Calu3 (cell line): ENCODE measurements at regions of chr7 and their contacts with region 1.

Region 1: DNA sequence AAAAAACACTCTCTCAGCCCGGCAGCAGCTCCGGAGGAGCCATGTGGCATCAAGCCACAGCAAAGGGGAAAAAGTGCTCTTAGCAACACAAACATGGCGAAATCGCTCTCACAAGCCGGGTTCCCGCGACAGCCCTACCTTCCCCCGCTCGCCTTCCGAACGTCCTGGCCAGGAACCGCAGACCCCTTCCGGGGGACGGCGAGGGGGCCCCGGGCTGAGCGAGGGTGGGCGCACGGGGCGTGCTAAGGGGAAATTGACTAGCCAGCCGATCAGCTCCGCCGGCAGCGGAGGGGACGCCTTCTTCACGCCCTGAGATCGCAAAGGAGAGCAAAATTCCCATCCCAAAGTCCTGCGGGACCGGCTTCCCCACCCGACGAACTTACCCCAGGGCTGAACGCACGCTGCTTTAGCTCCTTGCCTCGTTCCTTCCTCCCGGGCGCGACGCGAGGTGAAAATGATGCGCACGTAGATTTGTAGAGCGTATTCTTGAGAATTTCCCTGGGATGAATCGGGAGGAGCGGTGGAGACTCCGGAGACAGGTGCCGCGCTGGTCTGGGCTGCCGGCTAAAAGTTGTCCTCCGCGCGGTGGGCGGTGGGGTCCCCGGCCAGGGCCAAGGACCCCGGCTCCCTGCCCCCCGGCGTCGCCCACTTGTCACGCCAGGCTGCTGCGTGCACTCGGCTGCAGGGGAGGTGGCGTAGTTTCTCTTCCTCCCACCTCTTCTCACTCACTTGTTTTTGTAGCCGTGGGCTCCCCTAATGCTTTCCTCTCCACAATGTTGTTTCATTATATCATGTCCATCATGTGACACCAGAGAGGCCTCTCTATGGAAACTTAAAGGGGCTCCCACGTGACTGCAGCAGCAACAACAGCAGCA is 220.1 kb upstream of the MKLN1 start:
- DNase-seq: peak; percentile 52
- H3K4me3 Mint-ChIP-seq: peak overlapping the region; percentile 100
- H3K27ac Mint-ChIP-seq: peak overlapping the region; percentile 91
- H3K4me1 Mint-ChIP-seq: peaks cover 47% of the 10 kb centered on the region
- H3K27me3 Mint-ChIP-seq: no peaks in the 10 kb centered on the region
- CTCF ChIP-seq: no peak

Region 2: DNA sequence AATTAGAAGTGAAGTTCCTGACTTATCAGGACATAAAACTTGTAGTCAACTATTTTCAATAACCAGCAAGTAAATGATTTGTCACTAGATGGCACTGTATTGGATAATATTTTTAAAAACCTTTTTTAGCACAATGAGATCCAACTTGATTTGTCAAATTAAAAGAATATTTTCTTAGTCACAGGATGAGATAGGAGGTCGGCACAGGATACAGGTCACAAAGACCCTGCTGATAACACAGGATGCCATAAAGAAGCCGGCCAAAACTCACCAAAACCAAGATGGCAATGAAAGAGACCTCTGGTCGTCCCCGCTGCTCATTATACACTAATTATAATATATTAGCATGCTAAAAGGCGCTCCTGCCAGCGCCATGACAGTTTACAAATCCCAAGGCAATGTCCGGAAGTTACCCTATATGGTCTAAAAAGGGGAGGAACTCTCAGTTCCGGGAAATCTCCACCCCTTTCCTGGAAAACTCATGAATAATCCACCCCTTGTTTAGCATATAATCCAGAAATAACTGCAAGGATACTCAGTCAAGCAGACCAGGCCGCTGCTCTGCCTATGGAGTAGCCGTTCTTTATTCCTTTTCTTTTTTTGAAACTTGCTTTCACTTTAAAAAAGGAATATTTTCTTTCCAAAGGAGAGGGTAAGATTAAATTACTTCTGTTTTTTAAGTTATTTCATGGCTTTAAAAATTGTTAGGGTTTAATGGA is 35.6 kb before region 1 on chr7:
- CTCF ChIA-PET with region 1: interaction called, 4 read pairs
- intact Hi-C with region 1: loop called (anchors 5 kb)
- DNase-seq: peak; percentile 81
- H3K4me3 Mint-ChIP-seq: peak overlapping the region; percentile 50
- H3K27ac Mint-ChIP-seq: peak overlapping the region; percentile 58
- H3K4me1 Mint-ChIP-seq: peaks cover 26% of the 10 kb centered on the region
- H3K27me3 Mint-ChIP-seq: no peaks in the 10 kb centered on the region
- CTCF ChIP-seq: peak; percentile 67

Region 3: GRCh38 chr7:131231381-131232220 is 124.0 kb after region 1 on chr7:
- CTCF ChIA-PET with region 1: interaction called, 3 read pairs
- intact Hi-C with region 1: loop called (anchors 5 kb)
- DNase-seq: no peak
- H3K4me3 Mint-ChIP-seq: no peak overlapping the region
- H3K27ac Mint-ChIP-seq: peak overlapping the region; percentile 18
- H3K4me1 Mint-ChIP-seq: peaks cover 48% of the 10 kb centered on the region
- H3K27me3 Mint-ChIP-seq: no peaks in the 10 kb centered on the region
- CTCF ChIP-seq: no peak

Region 4: GRCh38 chr7:131459256-131459655 is 351.7 kb after region 1 on chr7:
- CTCF ChIA-PET with region 1: no interaction called
- intact Hi-C with region 1: no loop called
- DNase-seq: no peak
- H3K4me3 Mint-ChIP-seq: no peak overlapping the region
- H3K27ac Mint-ChIP-seq: peak overlapping the region; percentile 3
- H3K4me1 Mint-ChIP-seq: peaks cover 60% of the 10 kb centered on the region
- H3K27me3 Mint-ChIP-seq: no peaks in the 10 kb centered on the region
- CTCF ChIP-seq: no peak